ENCODE measurements at regions of chr2 and their contacts with region 1.

Region 1: GRCh38 chr2:53886406-53887280 is 26.9 kb upstream of the GPR75 start:
- DNase-seq: no peak
- ATAC-seq: no peak
- H3K4me3 ChIP-seq: no peak overlapping the region
- H3K27ac ChIP-seq: no peak overlapping the region
- H3K4me1 ChIP-seq: no peaks in the 10 kb centered on the region
- H3K27me3 ChIP-seq: no peaks in the 10 kb centered on the region

Region 2: DNA sequence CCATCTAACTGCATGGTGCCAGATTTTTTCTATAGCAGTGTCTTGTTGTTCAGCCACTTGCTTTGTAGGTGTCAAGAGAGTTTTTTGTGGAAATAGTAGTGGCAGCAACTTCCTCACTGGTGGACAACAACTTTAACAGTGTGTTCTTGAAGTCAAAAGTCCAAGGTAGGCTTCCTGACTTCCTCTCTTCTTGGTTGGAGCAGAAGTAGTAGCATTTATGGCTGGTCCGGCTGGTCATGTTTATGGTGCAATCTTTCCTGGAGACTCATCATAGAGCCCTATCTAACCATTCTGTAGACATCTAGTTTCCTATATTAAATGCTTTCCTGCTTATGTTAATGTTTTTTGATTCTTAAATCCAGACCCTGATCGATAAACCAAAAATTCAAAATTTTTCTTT is 38.6 kb before region 1 on chr2:
- intact Hi-C with region 1: no loop called
- DNase-seq: no peak
- ATAC-seq: no peak
- H3K4me3 ChIP-seq: no peak overlapping the region
- H3K27ac ChIP-seq: no peak overlapping the region
- H3K4me1 ChIP-seq: no peaks in the 10 kb centered on the region
- H3K27me3 ChIP-seq: no peaks in the 10 kb centered on the region

Region 3: DNA sequence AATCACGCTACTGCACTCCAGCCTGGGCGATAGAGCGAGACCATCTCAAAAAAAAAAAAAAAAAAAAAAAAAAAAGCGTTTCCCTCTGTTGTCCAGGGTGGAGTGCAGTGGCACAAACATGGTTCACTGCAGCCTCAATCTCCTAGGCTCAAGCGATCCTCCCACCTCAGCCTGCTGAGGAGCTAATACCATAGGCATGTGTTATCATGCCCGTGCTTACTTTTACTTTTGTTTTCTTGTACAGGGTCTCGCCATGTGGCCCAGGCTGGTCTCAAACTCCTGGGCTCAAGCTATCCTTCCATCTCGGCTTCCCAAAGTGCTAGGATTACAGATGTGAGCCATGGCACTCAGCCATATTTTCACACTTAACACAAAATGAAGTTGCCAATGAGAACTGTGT is 46.7 kb after region 1 on chr2:
- intact Hi-C with region 1: loop called in 1 of 4 experiments (anchors 2 kb)
- DNase-seq: no peak
- ATAC-seq: no peak
- H3K4me3 ChIP-seq: no peak overlapping the region
- H3K27ac ChIP-seq: no peak overlapping the region
- H3K4me1 ChIP-seq: no peaks in the 10 kb centered on the region
- H3K27me3 ChIP-seq: no peaks in the 10 kb centered on the region